Ovary (tissue), 10 donors: ENCODE measurements at regions of chr12 and their contacts with region 1.

Region 1: DNA sequence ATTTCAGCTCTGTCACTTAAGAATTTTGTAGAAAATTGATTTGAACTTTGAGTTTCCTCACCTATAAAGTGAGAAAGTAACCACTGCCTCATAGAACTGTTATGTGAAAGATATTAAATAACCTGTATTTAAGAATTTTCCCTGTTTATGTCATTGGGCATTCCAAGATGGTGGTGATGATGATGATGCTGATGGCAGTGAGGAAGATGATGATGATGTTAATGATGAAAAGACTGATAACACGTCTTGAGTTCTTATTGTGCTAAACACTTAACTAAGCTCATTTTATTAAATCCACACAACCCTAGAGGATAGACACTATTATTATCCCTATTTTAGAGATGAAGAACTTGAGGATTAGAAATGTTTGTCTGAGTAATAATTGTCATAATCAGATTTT is 165.7 kb upstream of the PDZRN4 start:
- DNase-seq: no peak
- H3K4me3 ChIP-seq: no peak overlapping the region
- H3K27ac ChIP-seq: no peak overlapping the region
- H3K4me1 ChIP-seq: no peaks in the 10 kb centered on the region
- H3K27me3 ChIP-seq: no peaks in the 10 kb centered on the region
- CTCF ChIP-seq: no peak
- EP300 ChIP-seq: no peak
- POLR2A ChIP-seq: no peak

Region 2: GRCh38 chr12:40986001-40986400 is 36.4 kb before region 1 on chr12:
- intact Hi-C with region 1: loop called in 1 of 4 experiments (anchors 1 kb)
- DNase-seq: no peak
- H3K4me3 ChIP-seq: no peak overlapping the region
- H3K27ac ChIP-seq: no peak overlapping the region
- H3K4me1 ChIP-seq: no peaks in the 10 kb centered on the region
- H3K27me3 ChIP-seq: no peaks in the 10 kb centered on the region
- CTCF ChIP-seq: no peak
- EP300 ChIP-seq: no peak
- POLR2A ChIP-seq: no peak

Region 3: DNA sequence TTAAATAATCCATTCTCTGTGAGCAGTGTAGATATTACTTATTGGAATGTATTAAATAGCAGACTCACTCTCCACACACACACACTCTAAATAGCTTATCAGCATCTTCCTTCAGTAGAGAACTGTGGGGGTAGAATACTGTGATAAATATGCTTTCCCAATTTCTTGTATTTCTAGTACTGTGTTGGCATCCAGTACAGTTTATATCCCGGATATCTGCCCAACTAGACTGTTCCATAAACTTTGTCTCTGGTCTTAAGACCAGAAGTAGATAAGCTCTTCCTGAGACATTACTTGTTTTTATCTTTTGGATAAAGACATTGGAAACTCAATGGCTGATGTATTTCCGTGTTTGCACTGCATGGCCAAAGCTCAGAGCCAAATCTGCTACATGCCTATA is 29.5 kb after region 1 on chr12:
- intact Hi-C with region 1: no loop called
- DNase-seq: no peak
- H3K4me3 ChIP-seq: no peak overlapping the region
- H3K27ac ChIP-seq: no peak overlapping the region
- H3K4me1 ChIP-seq: no peaks in the 10 kb centered on the region
- H3K27me3 ChIP-seq: no peaks in the 10 kb centered on the region
- CTCF ChIP-seq: no peak
- EP300 ChIP-seq: no peak
- POLR2A ChIP-seq: no peak